Mammary epithelial cell (primary cell): ENCODE measurements at regions of chr12 and their contacts with region 1.

Region 1: DNA sequence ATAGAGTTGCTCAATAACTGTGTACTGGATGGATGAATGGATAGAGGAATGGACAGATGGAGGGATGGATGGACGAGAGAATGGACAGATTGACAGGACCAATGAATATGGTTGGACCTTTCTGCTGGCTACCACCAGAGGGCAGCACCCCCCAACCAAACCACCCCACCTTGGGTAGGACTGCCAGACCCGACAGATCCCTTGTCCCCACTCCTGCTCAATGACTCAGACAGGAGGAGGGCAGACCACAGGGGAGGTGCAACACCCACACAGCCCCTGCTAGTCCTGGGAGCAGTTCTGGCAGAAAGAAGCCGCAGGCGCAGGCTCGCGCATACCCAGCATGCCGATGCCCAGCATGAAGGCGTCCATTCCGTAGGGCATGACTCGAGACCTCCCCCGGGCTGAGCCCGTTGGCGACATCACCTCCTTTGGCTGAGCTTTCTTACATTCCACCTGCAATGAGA is 12.4 kb downstream of the MSI1 start:
- DNase-seq: peak; percentile 91
- H3K4me3 ChIP-seq: peak overlapping the region in 2 of 3 experiments; percentile 15 to 17
- H3K27ac ChIP-seq: no peak overlapping the region
- H3K4me1 ChIP-seq: peaks cover 5% of the 10 kb centered on the region
- H3K27me3 ChIP-seq: no peaks in the 10 kb centered on the region
- CTCF ChIP-seq: peak; percentile 91 to 95

Region 2: GRCh38 chr12:120437754-120438494 is 81.3 kb after region 1 on chr12 and contains the start of gene COX6A1:
- CTCF ChIA-PET with region 1: no interaction called
- dilution Hi-C with region 1: no loop called
- in situ Hi-C with region 1: loop called in 1 of 2 experiments (anchors 5 kb)
- intact Hi-C with region 1: loop called (anchors 2 kb)
- DNase-seq: peak; percentile 98
- H3K4me3 ChIP-seq: peak within 1 kb of the TSS; percentile 47 to 99 (median 82)
- H3K27ac ChIP-seq: peak within 1 kb of the TSS; percentile 61
- H3K4me1 ChIP-seq: peaks cover 14% of the 10 kb centered on the region
- H3K27me3 ChIP-seq: no peaks in the 10 kb centered on the region
- CTCF ChIP-seq: peak in 1 of 2 donors; percentile 21
- total RNA-seq, gene COX6A1: 306 to 422 TPM

Region 3: GRCh38 chr12:120469450-120470149 is 113.0 kb after region 1 on chr12 and contains the start of gene SRSF9:
- CTCF ChIA-PET with region 1: no interaction called
- dilution Hi-C with region 1: no loop called
- in situ Hi-C with region 1: no loop called
- intact Hi-C with region 1: loop called (anchors 1 kb)
- DNase-seq: peak; percentile 91
- H3K4me3 ChIP-seq: peak within 1 kb of the TSS; percentile 79 to 92 (median 79)
- H3K27ac ChIP-seq: peak within 1 kb of the TSS; percentile 64
- H3K4me1 ChIP-seq: peaks cover 16% of the 10 kb centered on the region
- H3K27me3 ChIP-seq: no peaks in the 10 kb centered on the region
- CTCF ChIP-seq: peak; percentile 62 to 93
- total RNA-seq, gene SRSF9: 84.7 to 205 TPM

Region 4: GRCh38 chr12:120495723-120496412 is 139.3 kb after region 1 on chr12 and contains the start of gene DYNLL1:
- CTCF ChIA-PET with region 1: no interaction called
- dilution Hi-C with region 1: no loop called
- in situ Hi-C with region 1: no loop called
- intact Hi-C with region 1: loop called (anchors 1 kb)
- DNase-seq: peak; percentile 94
- H3K4me3 ChIP-seq: peak within 1 kb of the TSS; percentile 73 to 81 (median 74)
- H3K27ac ChIP-seq: peak within 1 kb of the TSS; percentile 80
- H3K4me1 ChIP-seq: peaks cover 14% of the 10 kb centered on the region
- H3K27me3 ChIP-seq: no peaks in the 10 kb centered on the region
- CTCF ChIP-seq: no peak
- total RNA-seq, gene DYNLL1: 210 to 390 TPM

Region 5: GRCh38 chr12:120534203-120534702 is 177.7 kb after region 1 on chr12 and contains the start of gene RNF10:
- CTCF ChIA-PET with region 1: no interaction called
- dilution Hi-C with region 1: no loop called
- in situ Hi-C with region 1: no loop called
- intact Hi-C with region 1: loop called (anchors 10 kb)
- DNase-seq: peak; percentile 78
- H3K4me3 ChIP-seq: peak within 1 kb of the TSS; percentile 80 to 87 (median 83)
- H3K27ac ChIP-seq: peak within 1 kb of the TSS; percentile 74
- H3K4me1 ChIP-seq: peaks cover 49% of the 10 kb centered on the region
- H3K27me3 ChIP-seq: no peaks in the 10 kb centered on the region
- CTCF ChIP-seq: no peak
- total RNA-seq, gene RNF10: 104 to 152 TPM

Region 6: GRCh38 chr12:120640840-120641833 is 284.5 kb after region 1 on chr12:
- CTCF ChIA-PET with region 1: no interaction called
- dilution Hi-C with region 1: no loop called
- in situ Hi-C with region 1: no loop called
- intact Hi-C with region 1: loop called (anchors 10 kb)
- DNase-seq: peak; percentile 62
- H3K4me3 ChIP-seq: peak overlapping the region in 2 of 3 experiments; percentile 32 to 39
- H3K27ac ChIP-seq: no peak overlapping the region
- H3K4me1 ChIP-seq: peaks cover 6% of the 10 kb centered on the region
- H3K27me3 ChIP-seq: peaks cover 12% of the 10 kb centered on the region
- CTCF ChIP-seq: no peak

Region 7: DNA sequence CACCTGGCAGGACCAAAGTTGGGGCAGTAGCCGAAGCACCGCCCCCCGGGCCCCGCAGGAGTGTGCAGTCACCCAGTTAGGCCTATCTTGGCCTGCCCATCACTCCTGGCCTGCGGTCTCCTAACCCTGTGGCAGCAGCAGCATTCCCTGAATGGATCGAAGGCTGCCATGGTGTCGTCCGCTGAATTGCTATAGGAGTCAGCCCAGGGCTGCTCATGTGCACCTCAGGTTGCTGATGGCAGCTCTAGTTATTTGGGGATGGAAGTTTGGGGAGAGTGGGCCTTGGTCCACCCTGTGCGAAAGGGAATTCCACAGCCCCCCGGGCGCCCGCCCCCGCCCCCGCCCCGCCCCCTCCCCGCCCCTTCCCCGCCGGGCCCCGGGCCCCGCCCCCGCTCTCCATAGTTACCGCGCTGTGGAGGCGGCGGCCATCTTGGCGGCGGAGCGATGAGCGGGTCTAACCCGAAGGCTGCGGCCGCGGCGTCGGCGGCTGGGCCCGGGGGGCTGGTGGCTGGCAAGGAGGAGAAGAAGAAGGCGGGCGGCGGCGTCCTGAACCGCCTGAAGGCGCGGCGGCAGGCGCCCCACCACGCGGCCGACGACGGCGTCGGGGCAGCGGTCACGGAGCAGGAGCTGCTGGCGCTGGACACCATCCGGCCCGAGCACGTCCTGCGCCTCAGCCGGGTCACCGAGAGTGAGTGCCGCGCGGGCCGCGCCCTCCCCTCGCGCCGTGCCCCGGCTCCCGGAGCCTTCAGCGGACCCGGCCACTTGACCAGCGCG is 353.6 kb after region 1 on chr12 and contains the start of gene UNC119B:
- CTCF ChIA-PET with region 1: no interaction called
- dilution Hi-C with region 1: no loop called
- in situ Hi-C with region 1: no loop called
- intact Hi-C with region 1: loop called (anchors 1 kb)
- DNase-seq: peak; percentile 50
- H3K4me3 ChIP-seq: peak within 1 kb of the TSS; percentile 81 to 97 (median 93)
- H3K27ac ChIP-seq: peak within 1 kb of the TSS; percentile 84
- H3K4me1 ChIP-seq: peaks cover 15% of the 10 kb centered on the region
- H3K27me3 ChIP-seq: peaks cover 1% of the 10 kb centered on the region
- CTCF ChIP-seq: no peak
- total RNA-seq, gene UNC119B: 28.0 to 33.3 TPM

Region 8: GRCh38 chr12:120783197-120783596 is 426.6 kb after region 1 on chr12:
- CTCF ChIA-PET with region 1: no interaction called
- dilution Hi-C with region 1: no loop called
- in situ Hi-C with region 1: no loop called
- intact Hi-C with region 1: no loop called
- DNase-seq: peak; percentile 48
- H3K4me3 ChIP-seq: no peak overlapping the region
- H3K27ac ChIP-seq: no peak overlapping the region
- H3K4me1 ChIP-seq: peaks cover 9% of the 10 kb centered on the region
- H3K27me3 ChIP-seq: no peaks in the 10 kb centered on the region
- CTCF ChIP-seq: no peak